Common myeloid progenitor, CD34-positive (primary cell): ENCODE measurements at regions of chr11 and their contacts with region 1.

Region 1: GRCh38 chr11:14907411-14908213 is 15.6 kb upstream of the CYP2R1 start:
- DNase-seq: peak; percentile 67 to 81 (median 77)
- H3K4me3 ChIP-seq: no peak overlapping the region
- H3K27ac ChIP-seq: no peak overlapping the region
- H3K4me1 ChIP-seq: peaks cover 4 to 25% (median 16%) of the 10 kb centered on the region in 4 experiments
- H3K27me3 ChIP-seq: peaks cover 0 to 9% (median 2%) of the 10 kb centered on the region in 5 experiments

Region 2: GRCh38 chr11:14519917-14520746 is 387.5 kb before region 1 on chr11 and contains the start of gene PSMA1:
- CTCF ChIA-PET with region 1: interaction called, 10 read pairs
- POLR2A ChIA-PET with region 1: no interaction called
- DNase-seq: peak; percentile 95 to 98 (median 96)
- H3K4me3 ChIP-seq: peak within 1 kb of the TSS; percentile 68 to 99 (median 96)
- H3K27ac ChIP-seq: peak within 1 kb of the TSS; percentile 97 to 99
- H3K4me1 ChIP-seq: peaks cover 9 to 20% (median 16%) of the 10 kb centered on the region in 4 experiments
- H3K27me3 ChIP-seq: no peaks in the 10 kb centered on the region

Region 3: GRCh38 chr11:14835491-14836105 is 72.0 kb before region 1 on chr11:
- CTCF ChIA-PET with region 1: no interaction called
- POLR2A ChIA-PET with region 1: no interaction called
- DNase-seq: peak in 1 of 3 donors; percentile 2
- H3K4me3 ChIP-seq: no peak overlapping the region
- H3K27ac ChIP-seq: no peak overlapping the region
- H3K4me1 ChIP-seq: no peaks in the 10 kb centered on the region
- H3K27me3 ChIP-seq: no peaks in the 10 kb centered on the region

Region 4: DNA sequence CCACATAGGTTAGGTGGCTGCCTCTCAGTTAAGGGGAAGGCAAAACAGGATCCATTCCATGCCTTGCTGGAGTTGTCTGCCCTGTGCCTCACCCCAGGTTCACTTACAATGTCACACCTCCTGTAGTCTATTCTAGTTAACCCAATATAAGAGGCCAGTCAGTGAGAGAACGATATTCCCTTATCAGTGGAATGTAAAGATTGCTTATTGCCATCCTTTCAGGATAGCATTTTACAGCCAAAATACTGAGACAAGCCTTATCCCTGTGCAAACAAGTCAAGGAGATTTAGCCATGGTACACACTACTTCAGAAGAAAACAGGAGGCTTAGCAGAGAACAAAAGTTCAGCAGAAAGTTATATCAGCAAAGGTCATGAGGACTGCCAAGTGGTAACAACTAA is 21.1 kb before region 1 on chr11:
- CTCF ChIA-PET with region 1: interaction called, 74 read pairs
- POLR2A ChIA-PET with region 1: interaction called, 7 read pairs
- DNase-seq: no peak
- H3K4me3 ChIP-seq: no peak overlapping the region
- H3K27ac ChIP-seq: no peak overlapping the region
- H3K4me1 ChIP-seq: peaks cover 0 to 10% (median 9%) of the 10 kb centered on the region in 4 experiments
- H3K27me3 ChIP-seq: no peaks in the 10 kb centered on the region

Region 5: GRCh38 chr11:14974515-14975251 is 67.1 kb after region 1 on chr11:
- CTCF ChIA-PET with region 1: interaction called, 14 read pairs
- POLR2A ChIA-PET with region 1: no interaction called
- DNase-seq: peak; percentile 57 to 69 (median 66)
- H3K4me3 ChIP-seq: peak overlapping the region in 5 of 7 experiments; percentile 17 to 67 (median 43)
- H3K27ac ChIP-seq: no peak overlapping the region
- H3K4me1 ChIP-seq: peaks cover 6 to 32% (median 23%) of the 10 kb centered on the region in 4 experiments
- H3K27me3 ChIP-seq: peaks cover 15 to 85% (median 50%) of the 10 kb centered on the region in 5 experiments

Region 6: GRCh38 chr11:15011776-15012175 is 104.2 kb after region 1 on chr11:
- CTCF ChIA-PET with region 1: no interaction called
- POLR2A ChIA-PET with region 1: no interaction called
- DNase-seq: no peak
- H3K4me3 ChIP-seq: no peak overlapping the region
- H3K27ac ChIP-seq: no peak overlapping the region
- H3K4me1 ChIP-seq: no peaks in the 10 kb centered on the region
- H3K27me3 ChIP-seq: peaks cover 4 to 17% (median 8%) of the 10 kb centered on the region in 5 experiments

Region 7: DNA sequence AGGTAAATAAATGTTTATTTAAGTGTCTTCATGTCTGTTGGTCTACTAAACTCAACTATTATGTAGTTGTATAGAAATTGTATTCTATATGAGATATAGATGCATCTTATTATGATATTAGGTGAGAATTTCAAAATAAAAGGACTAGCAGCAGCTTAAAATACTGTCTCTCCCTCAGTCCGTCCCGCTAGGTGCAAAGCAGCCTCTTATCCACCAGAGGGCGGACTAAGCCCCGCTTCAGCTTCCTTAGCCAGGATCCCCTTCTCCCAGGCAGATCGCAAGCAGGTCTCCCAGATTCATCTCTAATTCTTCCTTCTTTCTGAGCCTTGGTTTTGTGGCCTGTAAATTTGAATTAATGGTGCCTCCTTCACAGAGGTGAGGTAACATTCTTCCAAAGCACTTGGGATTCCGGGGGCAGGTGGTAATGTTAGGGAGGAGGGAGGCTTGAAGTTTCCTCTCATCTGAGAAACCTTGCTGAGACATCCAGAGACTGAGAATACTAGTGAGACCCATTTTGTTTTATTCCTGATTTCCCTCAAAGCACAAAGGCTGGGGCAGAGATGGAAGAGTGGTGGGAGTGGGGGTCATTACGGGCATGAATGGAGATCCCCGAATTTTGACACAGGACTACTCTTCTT is 193.6 kb after region 1 on chr11:
- CTCF ChIA-PET with region 1: interaction called, 10 read pairs
- POLR2A ChIA-PET with region 1: no interaction called
- DNase-seq: peak; percentile 50 to 70 (median 58)
- H3K4me3 ChIP-seq: no peak overlapping the region
- H3K27ac ChIP-seq: no peak overlapping the region
- H3K4me1 ChIP-seq: peaks cover 0 to 8% (median 0%) of the 10 kb centered on the region in 4 experiments
- H3K27me3 ChIP-seq: peaks cover 0 to 16% (median 5%) of the 10 kb centered on the region in 5 experiments

Region 8: GRCh38 chr11:15213471-15214231 is 306.0 kb after region 1 on chr11:
- CTCF ChIA-PET with region 1: interaction called, 29 read pairs
- POLR2A ChIA-PET with region 1: no interaction called
- DNase-seq: no peak
- H3K4me3 ChIP-seq: no peak overlapping the region
- H3K27ac ChIP-seq: no peak overlapping the region
- H3K4me1 ChIP-seq: no peaks in the 10 kb centered on the region
- H3K27me3 ChIP-seq: no peaks in the 10 kb centered on the region